Sciatic nerve (tissue), 2 donors: ENCODE measurements at regions of chr20 and their contacts with region 1.

Region 1: DNA sequence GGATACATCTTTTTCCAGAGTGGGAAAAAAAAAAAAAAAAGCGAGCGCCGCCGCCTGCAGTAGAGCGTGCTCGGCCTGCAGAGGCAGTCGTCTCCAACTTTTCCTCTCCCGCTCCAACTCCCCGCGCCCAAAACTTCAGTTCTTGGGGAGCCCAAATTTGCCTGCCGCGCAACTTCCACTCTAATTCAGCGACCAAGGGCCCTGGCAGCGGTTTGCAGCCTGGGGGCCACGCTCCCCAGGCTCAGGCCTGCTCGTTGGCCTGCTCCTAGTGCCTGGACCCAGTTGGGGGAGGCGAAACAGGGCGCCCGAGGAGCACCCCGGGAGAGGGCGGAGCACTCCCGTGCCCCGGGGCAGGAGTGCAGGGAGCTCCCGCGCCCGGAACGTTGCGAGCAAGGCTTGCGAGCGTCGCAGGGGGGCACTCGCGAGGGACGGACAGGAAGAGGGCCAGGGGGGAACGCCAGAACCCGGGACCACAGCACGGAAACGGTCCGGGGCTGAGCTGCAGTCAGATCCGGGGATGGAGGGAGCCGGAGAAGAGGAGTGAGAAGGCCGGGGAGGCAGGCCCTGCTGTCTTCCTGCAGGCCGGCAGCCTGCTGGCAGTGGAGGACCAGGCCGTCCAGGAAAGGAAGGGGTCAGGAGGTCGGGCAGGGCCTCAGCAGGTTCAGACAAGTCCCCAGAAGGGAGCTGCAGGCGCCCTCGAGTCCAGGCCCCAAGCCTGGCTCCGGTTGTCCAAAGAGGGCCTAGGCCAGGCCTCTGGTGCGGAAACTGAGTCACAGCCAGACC is at the start of gene STX16:
- DNase-seq: peak; percentile 94
- ATAC-seq: peak; percentile 97
- total RNA-seq, gene STX16: 78.7 TPM

Region 2: GRCh38 chr20:57957411-57958049 is 693.4 kb before region 1 on chr20:
- intact Hi-C with region 1: no loop called
- DNase-seq: no peak
- ATAC-seq: no peak

Region 3: GRCh38 chr20:58236612-58237330 is 414.2 kb before region 1 on chr20:
- intact Hi-C with region 1: loop called (anchors 10 kb)
- DNase-seq: peak; percentile 88
- ATAC-seq: peak; percentile 92